ENCODE measurements at regions of chr12 and their contacts with region 1.

Region 1: GRCh38 chr12:110619534-110619953 is 5.6 kb downstream of the TCTN1 start:
- DNase-seq: no peak
- ATAC-seq: peak; percentile 79
- H3K4me3 Mint-ChIP-seq: peak overlapping the region; percentile 84
- H3K27ac Mint-ChIP-seq: peak overlapping the region; percentile 94
- H3K4me1 Mint-ChIP-seq: peaks cover 79% of the 10 kb centered on the region
- H3K27me3 Mint-ChIP-seq: no peaks in the 10 kb centered on the region
- CTCF ChIP-seq: no peak

Region 2: GRCh38 chr12:110639336-110640141 is 20.0 kb after region 1 on chr12:
- CTCF ChIA-PET with region 1: no interaction called
- POLR2A ChIA-PET with region 1: interaction called, 20 read pairs
- intact Hi-C with region 1: no loop called
- DNase-seq: no peak
- ATAC-seq: peak; percentile 27
- H3K4me3 Mint-ChIP-seq: peak overlapping the region; percentile 36
- H3K27ac Mint-ChIP-seq: peak overlapping the region; percentile 89
- H3K4me1 Mint-ChIP-seq: peaks cover 98% of the 10 kb centered on the region
- H3K27me3 Mint-ChIP-seq: no peaks in the 10 kb centered on the region
- CTCF ChIP-seq: no peak

Region 3: DNA sequence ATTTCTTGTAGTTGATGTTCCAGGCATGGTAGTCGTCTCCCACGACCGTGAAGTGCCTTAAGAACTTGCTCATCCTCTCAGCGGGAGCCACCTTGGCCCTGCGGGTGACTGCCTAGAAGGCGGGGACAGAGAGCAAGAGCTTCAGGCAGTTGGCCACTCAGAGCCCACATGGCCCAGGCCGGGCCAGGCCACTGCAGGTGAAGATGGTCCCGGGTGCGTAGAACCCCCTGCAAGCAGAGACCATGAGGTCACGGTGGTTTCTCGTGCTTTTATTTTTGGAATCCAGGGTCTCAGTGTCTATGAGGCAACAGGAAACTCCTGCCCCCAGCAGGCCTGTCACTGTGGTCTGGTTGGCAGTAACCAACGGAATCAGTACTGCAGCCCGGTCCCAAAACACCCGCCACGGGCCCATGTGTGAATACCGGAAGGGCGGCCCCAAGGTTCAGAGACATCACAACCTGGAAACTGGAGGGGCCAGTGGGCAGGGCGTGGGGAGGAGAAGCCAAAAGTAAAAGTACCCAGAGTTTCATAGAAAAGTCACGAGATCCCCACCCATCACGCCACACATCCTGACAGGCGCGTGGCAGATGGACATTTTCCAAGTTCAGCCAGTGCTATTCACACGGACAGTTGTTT is 41.9 kb after region 1 on chr12:
- CTCF ChIA-PET with region 1: interaction called, 4 read pairs
- POLR2A ChIA-PET with region 1: interaction called, 9 read pairs
- intact Hi-C with region 1: loop called (anchors 1 kb)
- DNase-seq: peak; percentile 73
- ATAC-seq: peak; percentile 87
- H3K4me3 Mint-ChIP-seq: peak overlapping the region; percentile 82
- H3K27ac Mint-ChIP-seq: peak overlapping the region; percentile 97
- H3K4me1 Mint-ChIP-seq: peaks cover 89% of the 10 kb centered on the region
- H3K27me3 Mint-ChIP-seq: no peaks in the 10 kb centered on the region
- CTCF ChIP-seq: no peak

Region 4: GRCh38 chr12:110689281-110690126 is 70.0 kb after region 1 on chr12:
- CTCF ChIA-PET with region 1: interaction called, 8 read pairs
- POLR2A ChIA-PET with region 1: interaction called, 11 read pairs
- intact Hi-C with region 1: loop called (anchors 2 kb)
- DNase-seq: peak; percentile 61
- ATAC-seq: peak; percentile 63
- H3K4me3 Mint-ChIP-seq: peak overlapping the region; percentile 92
- H3K27ac Mint-ChIP-seq: peak overlapping the region; percentile 89
- H3K4me1 Mint-ChIP-seq: peaks cover 82% of the 10 kb centered on the region
- H3K27me3 Mint-ChIP-seq: no peaks in the 10 kb centered on the region
- CTCF ChIP-seq: no peak

Region 5: GRCh38 chr12:110742718-110743570 is 123.4 kb after region 1 on chr12 and contains the start of gene PPP1CC:
- CTCF ChIA-PET with region 1: interaction called, 3 read pairs
- POLR2A ChIA-PET with region 1: interaction called, 6 read pairs
- intact Hi-C with region 1: loop called (anchors 1 kb)
- DNase-seq: peak; percentile 82
- ATAC-seq: peak; percentile 94
- H3K4me3 Mint-ChIP-seq: peak within 1 kb of the TSS; percentile 98
- H3K27ac Mint-ChIP-seq: peak within 1 kb of the TSS; percentile 93
- H3K4me1 Mint-ChIP-seq: peaks cover 44% of the 10 kb centered on the region
- H3K27me3 Mint-ChIP-seq: no peaks in the 10 kb centered on the region
- CTCF ChIP-seq: no peak
- total RNA-seq, gene PPP1CC: 148 and 152 TPM in 2 replicates

Region 6: DNA sequence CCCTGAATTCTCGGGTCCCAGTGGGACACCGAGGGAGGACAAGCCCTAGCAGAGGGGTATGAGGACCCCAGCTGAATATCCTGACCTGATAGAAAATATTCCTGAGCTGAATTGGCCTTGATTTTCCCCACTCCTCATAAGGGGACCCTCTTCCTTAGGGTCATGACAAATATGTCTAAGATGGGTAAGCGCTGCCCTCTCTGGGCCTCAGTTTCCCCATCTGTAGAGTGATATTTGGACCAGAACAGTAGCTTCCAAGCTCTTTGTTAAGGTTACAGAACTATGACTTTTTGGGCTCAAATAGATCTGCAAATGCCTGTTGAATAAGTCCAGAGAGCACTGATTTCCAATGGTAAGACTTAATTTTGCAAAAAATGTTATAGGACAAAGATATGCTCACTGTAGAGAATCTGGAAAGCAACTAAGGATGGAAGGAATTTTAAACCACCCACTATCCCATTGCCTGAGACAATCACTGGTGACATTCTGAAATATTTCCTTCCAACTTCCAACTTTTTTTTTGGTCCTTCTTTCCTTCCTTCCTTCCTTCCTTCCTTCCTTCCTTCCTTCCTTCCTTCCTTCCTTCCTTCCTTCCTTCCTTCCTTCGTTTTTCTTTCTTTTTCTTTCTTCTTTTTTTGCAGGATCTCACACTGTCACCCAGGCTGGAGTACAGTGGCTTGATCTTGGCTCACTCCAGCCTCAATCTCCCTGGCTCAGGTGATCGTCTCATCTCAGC is 268.9 kb after region 1 on chr12:
- CTCF ChIA-PET with region 1: interaction called, 3 read pairs
- POLR2A ChIA-PET with region 1: no interaction called
- intact Hi-C with region 1: loop called (anchors 1 kb)
- DNase-seq: no peak
- ATAC-seq: no peak
- H3K4me3 Mint-ChIP-seq: peak overlapping the region; percentile 92
- H3K27ac Mint-ChIP-seq: peak overlapping the region; percentile 84
- H3K4me1 Mint-ChIP-seq: peaks cover 4% of the 10 kb centered on the region
- H3K27me3 Mint-ChIP-seq: no peaks in the 10 kb centered on the region
- CTCF ChIP-seq: no peak

Region 7: GRCh38 chr12:111149299-111149698 is 529.8 kb after region 1 on chr12:
- CTCF ChIA-PET with region 1: no interaction called
- POLR2A ChIA-PET with region 1: no interaction called
- intact Hi-C with region 1: no loop called
- DNase-seq: no peak
- ATAC-seq: no peak
- H3K4me3 Mint-ChIP-seq: no peak overlapping the region
- H3K27ac Mint-ChIP-seq: no peak overlapping the region
- H3K4me1 Mint-ChIP-seq: no peaks in the 10 kb centered on the region
- H3K27me3 Mint-ChIP-seq: peaks cover 18% of the 10 kb centered on the region
- CTCF ChIP-seq: no peak

Measured in activated B cell treated with CpG ODN at 0.5 μM for 24 hours (primary cell).